Activated CD4-positive, alpha-beta T cell treated with anti-CD3 and anti-CD28 coated beads for 36 hours (primary cell): ENCODE measurements at regions of chr6 and their contacts with region 1.

Region 1: DNA sequence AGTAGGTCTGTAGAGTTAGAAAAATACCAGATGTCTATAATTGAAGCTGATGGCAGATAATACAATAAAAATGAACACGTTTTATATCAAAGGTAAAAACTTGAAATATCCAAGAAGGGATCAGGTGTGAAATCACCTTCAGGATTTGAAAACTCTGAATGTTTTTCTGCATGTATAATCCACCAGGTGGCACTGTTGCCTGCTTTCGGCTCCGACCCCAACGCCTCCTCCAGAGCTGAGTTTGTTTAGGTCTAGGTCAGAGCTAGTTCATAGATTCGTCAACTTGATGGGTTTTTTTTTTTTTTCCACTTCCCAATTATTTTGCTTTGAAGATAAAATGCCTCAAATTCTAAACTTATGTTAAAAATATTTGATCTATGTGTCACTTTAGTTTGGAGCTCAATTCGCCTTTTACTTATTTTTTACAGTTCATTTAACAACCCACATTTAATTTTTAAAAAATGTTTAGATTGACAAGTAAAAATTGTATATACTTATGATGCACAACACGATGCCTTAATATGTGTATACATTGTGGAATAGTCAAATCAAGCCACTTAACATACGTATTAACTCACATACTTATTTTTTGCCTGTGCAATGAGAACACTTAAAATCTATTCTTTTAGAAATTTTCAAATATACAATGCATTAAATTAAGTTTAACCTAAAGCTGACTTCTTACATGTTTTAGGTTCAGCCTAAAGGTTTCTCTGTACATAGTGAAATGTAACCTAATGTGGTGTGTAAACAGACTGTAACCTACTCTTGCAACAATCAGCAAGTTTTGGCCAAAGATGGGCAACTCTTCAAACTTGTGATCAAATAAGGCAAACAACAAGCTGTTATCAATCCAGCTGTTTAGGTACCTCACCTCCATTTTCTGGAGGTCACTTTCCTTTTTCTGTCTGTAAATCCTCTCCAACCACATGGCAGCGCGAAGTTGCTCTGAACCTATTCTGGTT is 39.4 kb upstream of the ENPP4 start:
- DNase-seq: peak; percentile 76
- ATAC-seq: peak; percentile 58
- H3K4me3 Mint-ChIP-seq: no peak overlapping the region
- H3K27ac Mint-ChIP-seq: no peak overlapping the region
- H3K4me1 Mint-ChIP-seq: peaks cover 4% of the 10 kb centered on the region
- H3K27me3 Mint-ChIP-seq: peaks cover 33% of the 10 kb centered on the region

Region 2: GRCh38 chr6:45930420-45931040 is 159.9 kb before region 1 on chr6:
- CTCF ChIA-PET with region 1: interaction called, 4 read pairs
- POLR2A ChIA-PET with region 1: no interaction called
- intact Hi-C with region 1: loop called in 1 of 2 experiments (anchors 2 kb)
- DNase-seq: peak; percentile 74
- ATAC-seq: peak; percentile 42
- H3K4me3 Mint-ChIP-seq: no peak overlapping the region
- H3K27ac Mint-ChIP-seq: no peak overlapping the region
- H3K4me1 Mint-ChIP-seq: peaks cover 3% of the 10 kb centered on the region
- H3K27me3 Mint-ChIP-seq: no peaks in the 10 kb centered on the region

Region 3: DNA sequence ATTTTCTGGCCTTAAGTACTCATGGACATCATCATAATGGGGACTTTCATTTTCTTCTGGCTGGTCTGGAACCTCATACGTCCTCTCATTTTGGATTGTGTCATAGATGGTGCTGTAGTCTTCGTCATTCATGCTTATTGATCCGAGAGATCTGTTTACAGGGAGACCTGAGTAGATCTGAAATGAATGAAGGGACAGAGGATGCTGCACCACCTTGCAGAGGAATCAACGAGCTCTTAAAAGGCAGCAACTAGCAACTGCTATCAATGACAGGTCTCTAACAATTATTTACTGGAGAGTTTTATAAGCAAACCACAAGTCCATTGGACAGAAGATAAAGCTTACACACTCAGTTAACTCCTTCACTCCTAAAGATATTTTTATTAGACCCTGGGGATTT is 10.3 kb before region 1 on chr6:
- CTCF ChIA-PET with region 1: interaction called, 14 read pairs
- POLR2A ChIA-PET with region 1: no interaction called
- intact Hi-C with region 1: no loop called
- DNase-seq: no peak
- ATAC-seq: no peak
- H3K4me3 Mint-ChIP-seq: no peak overlapping the region
- H3K27ac Mint-ChIP-seq: no peak overlapping the region
- H3K4me1 Mint-ChIP-seq: peaks cover 8% of the 10 kb centered on the region
- H3K27me3 Mint-ChIP-seq: no peaks in the 10 kb centered on the region

Region 4: GRCh38 chr6:46129629-46130511 is 39.5 kb after region 1 on chr6 and contains the start of gene ENPP4:
- CTCF ChIA-PET with region 1: interaction called, 17 read pairs
- POLR2A ChIA-PET with region 1: interaction called, 4 read pairs
- intact Hi-C with region 1: loop called in 1 of 2 experiments (anchors 5 kb)
- DNase-seq: peak; percentile 92
- ATAC-seq: peak; percentile 100
- H3K4me3 Mint-ChIP-seq: peak within 1 kb of the TSS; percentile 87
- H3K27ac Mint-ChIP-seq: peak within 1 kb of the TSS; percentile 88
- H3K4me1 Mint-ChIP-seq: peaks cover 32% of the 10 kb centered on the region
- H3K27me3 Mint-ChIP-seq: no peaks in the 10 kb centered on the region
- total RNA-seq, gene ENPP4: 6.0 to 6.6 TPM

Region 5: DNA sequence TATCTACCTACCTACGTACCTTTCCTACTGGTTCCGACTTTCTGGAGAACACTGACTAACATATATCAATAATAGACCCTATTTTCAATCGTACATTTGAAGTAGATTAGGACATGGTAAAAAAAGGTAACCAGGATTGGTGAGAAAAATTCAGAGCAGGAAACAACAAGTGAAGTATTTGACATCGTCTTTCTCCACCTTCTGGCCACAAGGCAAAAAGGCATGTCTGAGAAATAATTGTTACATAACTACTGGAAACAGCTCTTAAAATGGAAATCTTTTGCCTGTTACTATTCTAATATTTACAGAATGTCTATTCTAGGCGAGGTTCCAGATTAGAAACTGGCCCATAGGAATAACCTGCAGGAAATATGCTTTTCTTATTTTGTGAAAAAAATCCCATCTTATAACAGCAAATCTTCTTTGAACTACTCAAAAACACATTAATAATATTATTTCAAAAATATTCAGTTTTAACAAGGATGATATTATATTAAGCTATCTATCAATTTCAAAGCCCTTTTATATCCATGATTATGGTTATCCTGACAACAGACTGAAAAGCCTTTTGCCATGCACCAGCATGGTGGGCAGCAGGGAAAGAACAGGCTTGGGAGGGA is 320.0 kb after region 1 on chr6:
- CTCF ChIA-PET with region 1: interaction called, 50 read pairs
- POLR2A ChIA-PET with region 1: no interaction called
- intact Hi-C with region 1: loop called (anchors 1 kb)
- DNase-seq: peak; percentile 22
- ATAC-seq: no peak
- H3K4me3 Mint-ChIP-seq: no peak overlapping the region
- H3K27ac Mint-ChIP-seq: no peak overlapping the region
- H3K4me1 Mint-ChIP-seq: no peaks in the 10 kb centered on the region
- H3K27me3 Mint-ChIP-seq: peaks cover 5% of the 10 kb centered on the region

Region 6: GRCh38 chr6:46626228-46626909 is 536.0 kb after region 1 on chr6:
- CTCF ChIA-PET with region 1: no interaction called
- POLR2A ChIA-PET with region 1: no interaction called
- intact Hi-C with region 1: loop called (anchors 1 kb)
- DNase-seq: no peak
- ATAC-seq: peak; percentile 75
- H3K4me3 Mint-ChIP-seq: no peak overlapping the region
- H3K27ac Mint-ChIP-seq: no peak overlapping the region
- H3K4me1 Mint-ChIP-seq: peaks cover 4% of the 10 kb centered on the region
- H3K27me3 Mint-ChIP-seq: peaks cover 21% of the 10 kb centered on the region

Region 7: DNA sequence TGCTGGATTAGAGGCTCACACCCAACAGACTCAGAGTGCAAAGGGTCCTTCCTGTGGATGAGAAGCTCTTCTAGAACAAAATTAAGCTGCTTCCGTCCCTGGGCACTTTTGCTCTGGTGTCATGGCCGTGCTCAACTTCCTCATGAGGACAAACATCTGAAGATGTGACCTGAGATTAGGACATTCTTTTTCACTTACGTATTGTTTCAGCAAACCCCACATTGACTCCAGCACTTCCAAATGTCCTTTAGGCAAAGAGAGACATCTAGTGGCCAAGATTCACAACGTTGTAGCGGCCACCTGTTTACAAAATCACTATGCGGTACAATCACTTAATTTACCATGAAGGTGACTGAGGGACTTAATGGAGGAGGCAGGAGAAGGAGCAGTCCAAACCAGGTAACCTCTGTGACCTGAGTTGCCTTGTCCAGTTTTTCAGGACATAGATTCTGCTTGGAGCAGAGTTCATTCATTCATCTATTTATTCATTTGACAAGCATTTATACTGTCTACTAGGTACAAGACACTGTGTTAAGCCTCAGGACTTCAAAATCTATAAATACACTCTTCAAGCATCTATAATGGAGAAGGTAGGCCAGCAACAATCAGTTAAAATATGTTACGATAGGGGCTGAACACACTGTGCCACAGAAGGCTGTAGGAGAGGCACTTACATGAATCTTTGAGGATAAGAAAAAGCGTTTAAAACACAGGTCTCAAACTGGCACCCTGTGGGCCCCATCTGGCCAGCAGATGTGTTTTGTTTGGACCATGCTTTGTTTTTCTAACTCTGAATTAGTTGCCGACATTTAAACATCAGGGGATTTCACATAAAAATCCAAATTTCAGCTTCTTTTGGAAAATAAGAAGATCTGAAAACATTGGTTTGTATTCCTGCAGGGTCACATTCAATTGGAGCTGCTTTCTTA is 957.3 kb after region 1 on chr6:
- CTCF ChIA-PET with region 1: no interaction called
- POLR2A ChIA-PET with region 1: no interaction called
- intact Hi-C with region 1: loop called in 1 of 2 experiments (anchors 5 kb)
- DNase-seq: peak; percentile 42
- ATAC-seq: peak; percentile 72
- H3K4me3 Mint-ChIP-seq: no peak overlapping the region
- H3K27ac Mint-ChIP-seq: no peak overlapping the region
- H3K4me1 Mint-ChIP-seq: peaks cover 2% of the 10 kb centered on the region
- H3K27me3 Mint-ChIP-seq: peaks cover 10% of the 10 kb centered on the region